AG04449 (cell line): ENCODE measurements at regions of chr9 and their contacts with region 1.

Region 1: GRCh38 chr9:15606643-15607472 is 54.0 kb downstream of the CCDC171 start:
- DNase-seq: no peak
- H3K4me3 ChIP-seq: no peak overlapping the region
- CTCF ChIP-seq: no peak

Region 2: GRCh38 chr9:15104826-15105420 is 501.9 kb before region 1 on chr9:
- CTCF ChIA-PET with region 1: interaction called, 11 read pairs
- POLR2A ChIA-PET with region 1: no interaction called
- DNase-seq: no peak
- H3K4me3 ChIP-seq: no peak overlapping the region
- CTCF ChIP-seq: peak; percentile 71

Region 3: DNA sequence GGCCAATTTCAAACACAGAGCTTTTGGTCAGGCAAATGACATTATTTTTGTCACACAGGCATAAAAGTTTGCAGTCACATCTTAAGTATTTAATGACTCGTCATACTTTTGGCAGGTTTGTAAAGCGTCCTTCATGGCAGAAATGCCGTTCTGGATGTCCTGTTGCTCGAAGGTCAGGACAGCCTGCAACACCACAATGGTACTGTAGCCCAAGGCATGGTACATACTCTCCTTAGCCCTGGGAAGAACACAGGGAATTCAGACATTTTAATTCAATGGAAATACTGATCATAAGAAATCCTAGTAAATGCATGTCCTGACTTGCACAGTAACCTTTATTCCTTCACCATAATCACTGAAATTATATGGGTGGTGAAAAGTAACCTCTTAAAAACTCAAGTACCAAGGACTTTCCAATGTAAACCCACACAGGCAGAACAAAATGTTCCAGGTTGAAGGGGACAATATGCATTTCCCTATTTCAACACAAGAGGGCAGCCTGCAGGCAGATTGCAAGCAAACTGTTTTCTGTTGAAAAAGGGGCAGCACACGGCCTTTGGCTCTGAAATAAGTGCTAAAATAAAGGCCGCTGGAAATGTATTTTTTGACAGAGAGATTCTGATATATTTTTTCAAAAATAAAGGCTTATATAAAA is 395.6 kb before region 1 on chr9:
- CTCF ChIA-PET with region 1: interaction called, 22 read pairs
- POLR2A ChIA-PET with region 1: no interaction called
- DNase-seq: no peak
- H3K4me3 ChIP-seq: no peak overlapping the region
- CTCF ChIP-seq: peak; percentile 81

Region 4: DNA sequence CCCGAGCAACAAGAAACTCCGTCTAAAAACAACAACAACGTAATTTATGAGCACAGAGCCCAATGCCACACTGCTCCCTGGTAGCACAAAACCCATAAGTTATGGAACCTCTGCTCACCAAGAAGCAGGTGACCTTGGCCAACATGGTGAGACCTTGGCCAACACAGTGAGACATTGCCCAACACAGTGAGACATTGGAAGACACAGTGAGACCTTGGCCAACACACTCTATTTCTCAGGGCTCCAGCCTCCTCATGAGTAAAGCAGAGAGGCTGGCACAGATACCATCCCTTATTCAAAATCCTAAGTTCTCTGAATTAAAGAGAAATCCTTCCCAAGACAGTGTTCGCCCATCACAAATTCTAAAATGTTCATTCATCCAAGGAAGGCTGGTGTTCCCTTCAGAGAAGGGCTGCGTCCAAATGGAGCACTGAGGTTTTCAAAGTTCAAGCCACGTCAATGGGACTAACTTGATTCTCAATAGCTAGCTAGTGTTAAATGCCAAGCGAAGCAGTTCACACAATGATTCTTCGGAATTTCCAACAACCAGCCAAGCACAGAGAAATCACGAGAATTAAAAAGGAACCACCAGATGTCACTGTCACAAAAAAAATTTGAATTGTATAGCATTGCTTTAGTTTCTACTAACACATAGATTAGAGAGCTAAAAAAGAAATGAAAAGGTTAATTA is 329.3 kb before region 1 on chr9:
- CTCF ChIA-PET with region 1: interaction called, 10 read pairs
- POLR2A ChIA-PET with region 1: no interaction called
- DNase-seq: no peak
- H3K4me3 ChIP-seq: no peak overlapping the region
- CTCF ChIP-seq: no peak

Region 5: DNA sequence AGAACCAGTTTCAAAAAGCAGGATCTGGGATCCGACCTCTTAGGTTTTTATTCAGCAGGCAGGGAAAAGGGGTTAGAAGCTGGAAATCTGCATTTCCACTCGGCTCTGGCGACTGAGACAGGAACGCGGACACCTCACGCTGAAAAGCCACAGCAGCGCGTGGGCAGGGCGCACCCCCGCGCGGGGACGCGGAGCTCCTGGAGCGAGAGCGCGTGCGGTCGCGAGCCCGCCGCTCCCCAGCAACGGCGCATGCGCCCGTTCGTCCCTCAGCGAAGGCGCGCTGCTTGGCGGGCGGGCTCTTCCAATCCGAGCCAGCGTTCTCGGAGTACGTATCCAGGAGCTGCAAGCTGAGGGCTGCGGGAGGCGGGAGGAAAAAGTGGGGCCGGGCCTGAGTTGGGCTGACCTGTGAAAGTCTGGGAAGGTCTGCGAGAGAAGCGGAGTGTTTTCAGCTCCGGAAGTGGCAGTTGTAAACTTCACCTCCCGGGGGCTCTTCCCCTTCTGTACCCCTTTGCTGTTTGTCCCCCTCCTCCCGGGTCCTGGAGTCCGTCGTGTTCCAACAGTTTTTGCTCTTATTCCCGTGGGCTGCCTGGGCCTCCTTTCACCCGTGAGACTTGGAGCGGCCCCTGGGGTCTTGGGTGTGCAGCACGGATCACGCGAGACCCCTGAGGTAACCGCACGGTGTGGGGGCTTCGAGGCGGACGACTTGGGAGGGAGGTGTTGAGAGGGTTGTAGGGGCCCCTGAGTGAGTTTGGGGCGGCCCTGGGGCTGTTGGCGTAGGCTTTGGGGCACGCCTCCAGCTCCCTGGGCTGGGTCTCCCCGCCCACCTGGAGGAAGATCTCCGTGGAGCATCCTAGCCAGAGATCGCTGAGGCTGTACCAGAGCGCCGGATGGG is 54.0 kb before region 1 on chr9 and contains the start of gene CCDC171:
- CTCF ChIA-PET with region 1: interaction called, 18 read pairs
- POLR2A ChIA-PET with region 1: no interaction called
- DNase-seq: peak; percentile 58
- H3K4me3 ChIP-seq: peak within 1 kb of the TSS; percentile 88
- CTCF ChIP-seq: no peak